ENCODE measurements at regions of chr3 and their contacts with region 1.

Region 1: DNA sequence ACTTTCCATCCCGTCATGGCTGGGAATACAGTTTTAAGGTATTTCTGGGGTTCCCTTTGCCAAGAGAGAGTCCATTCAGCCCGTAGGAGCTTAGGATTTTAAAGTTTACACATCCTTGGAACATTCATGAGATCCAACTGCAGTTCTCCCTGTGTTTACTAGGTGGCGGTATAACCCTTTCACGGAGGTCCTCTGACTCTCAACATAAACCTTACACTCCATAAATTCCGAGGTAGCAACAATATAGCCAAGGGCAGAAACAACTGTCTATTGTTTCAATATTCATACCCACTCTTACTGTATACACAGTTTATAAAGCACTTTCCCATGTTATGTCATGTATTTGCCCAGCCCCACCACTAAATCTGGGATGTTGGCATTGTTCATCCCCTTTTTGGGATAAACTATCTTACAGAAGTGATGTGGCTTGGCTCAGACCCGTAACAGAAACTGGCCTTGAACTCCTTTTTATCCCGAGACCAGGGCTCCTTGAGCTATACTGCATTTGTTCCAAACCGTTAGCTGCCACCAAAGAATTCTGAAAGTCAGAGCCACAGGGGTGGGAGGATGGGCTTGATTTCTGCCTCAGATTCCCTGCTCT is 69.2 kb upstream of the COL6A5 start:
- DNase-seq: no peak
- ATAC-seq: peak; percentile 93
- H3K4me3 Mint-ChIP-seq: no peak overlapping the region
- H3K27ac Mint-ChIP-seq: no peak overlapping the region
- H3K4me1 Mint-ChIP-seq: no peaks in the 10 kb centered on the region
- H3K27me3 Mint-ChIP-seq: no peaks in the 10 kb centered on the region
- CTCF ChIP-seq: peak; percentile 79

Region 2: GRCh38 chr3:130260918-130261317 is 15.4 kb before region 1 on chr3:
- CTCF ChIA-PET with region 1: interaction called, 13 read pairs
- POLR2A ChIA-PET with region 1: no interaction called
- DNase-seq: no peak
- ATAC-seq: no peak
- H3K4me3 Mint-ChIP-seq: no peak overlapping the region
- H3K27ac Mint-ChIP-seq: no peak overlapping the region
- H3K4me1 Mint-ChIP-seq: peaks cover 13% of the 10 kb centered on the region
- H3K27me3 Mint-ChIP-seq: peaks cover 2% of the 10 kb centered on the region; the same call in 1 of the 2 replicates
- CTCF ChIP-seq: no peak

Region 3: DNA sequence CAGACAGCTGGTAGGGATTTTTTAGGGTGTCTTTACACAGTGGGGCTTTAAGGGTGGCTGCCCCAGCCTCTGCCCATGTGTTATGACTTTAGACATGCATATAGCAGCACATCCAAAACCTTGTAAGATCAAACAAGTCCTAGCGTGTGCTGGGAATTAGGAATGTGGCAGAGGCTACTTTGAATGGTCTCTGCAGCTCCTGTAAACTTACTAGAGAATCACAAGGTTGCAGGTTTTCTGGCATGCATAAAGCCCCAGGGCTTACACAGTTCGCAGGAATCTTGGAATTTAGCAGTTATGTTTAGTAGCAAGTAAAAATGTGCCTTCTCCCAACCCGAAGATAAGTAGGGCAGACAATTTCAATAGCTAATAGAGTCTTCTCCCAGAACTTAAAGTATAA is 193.8 kb after region 1 on chr3:
- CTCF ChIA-PET with region 1: no interaction called
- POLR2A ChIA-PET with region 1: no interaction called
- DNase-seq: no peak
- ATAC-seq: no peak
- H3K4me3 Mint-ChIP-seq: no peak overlapping the region
- H3K27ac Mint-ChIP-seq: no peak overlapping the region
- H3K4me1 Mint-ChIP-seq: 0 out of 2 replicates have a peak, but pooled peaks cover 2% of the 10 kb centered on the region
- H3K27me3 Mint-ChIP-seq: 0 out of 2 replicates have a peak, but pooled peaks cover under 1% of the 10 kb centered on the region
- CTCF ChIP-seq: no peak

Region 4: DNA sequence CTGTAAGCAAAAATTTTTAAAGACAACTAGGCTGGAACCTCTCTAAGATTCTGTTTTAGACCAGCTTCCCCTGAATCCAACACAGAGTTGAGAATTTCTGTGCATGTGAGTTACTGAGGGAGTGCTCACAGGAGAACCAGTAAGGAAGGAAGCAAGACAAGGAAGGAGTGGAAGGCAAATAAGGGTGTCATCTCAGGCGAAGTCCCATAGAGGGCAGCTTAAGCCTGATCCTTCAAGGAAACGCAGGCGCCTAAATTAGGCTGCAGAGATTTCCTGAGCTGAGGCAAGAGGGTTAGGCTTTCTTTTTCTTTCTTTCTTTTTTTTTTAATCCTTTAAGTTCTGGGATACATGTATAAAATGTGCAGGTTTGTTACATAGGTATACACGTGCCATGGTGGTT is 204.4 kb after region 1 on chr3:
- CTCF ChIA-PET with region 1: interaction called, 12 read pairs
- POLR2A ChIA-PET with region 1: no interaction called
- DNase-seq: peak; percentile 53
- ATAC-seq: peak; percentile 98
- H3K4me3 Mint-ChIP-seq: no peak overlapping the region
- H3K27ac Mint-ChIP-seq: no peak overlapping the region
- H3K4me1 Mint-ChIP-seq: no peaks in the 10 kb centered on the region
- H3K27me3 Mint-ChIP-seq: no peaks in the 10 kb centered on the region
- CTCF ChIP-seq: peak; percentile 36; the same call in 1 of the 2 replicates

Region 5: GRCh38 chr3:130539005-130539404 is 262.7 kb after region 1 on chr3:
- CTCF ChIA-PET with region 1: interaction called, 19 read pairs
- POLR2A ChIA-PET with region 1: no interaction called
- DNase-seq: peak; percentile 69
- ATAC-seq: peak; percentile 92
- H3K4me3 Mint-ChIP-seq: no peak overlapping the region
- H3K27ac Mint-ChIP-seq: no peak overlapping the region
- H3K4me1 Mint-ChIP-seq: no peaks in the 10 kb centered on the region
- H3K27me3 Mint-ChIP-seq: no peaks in the 10 kb centered on the region
- CTCF ChIP-seq: peak; percentile 75